ENCODE measurements at regions of chr6 and their contacts with region 1.

Region 1: DNA sequence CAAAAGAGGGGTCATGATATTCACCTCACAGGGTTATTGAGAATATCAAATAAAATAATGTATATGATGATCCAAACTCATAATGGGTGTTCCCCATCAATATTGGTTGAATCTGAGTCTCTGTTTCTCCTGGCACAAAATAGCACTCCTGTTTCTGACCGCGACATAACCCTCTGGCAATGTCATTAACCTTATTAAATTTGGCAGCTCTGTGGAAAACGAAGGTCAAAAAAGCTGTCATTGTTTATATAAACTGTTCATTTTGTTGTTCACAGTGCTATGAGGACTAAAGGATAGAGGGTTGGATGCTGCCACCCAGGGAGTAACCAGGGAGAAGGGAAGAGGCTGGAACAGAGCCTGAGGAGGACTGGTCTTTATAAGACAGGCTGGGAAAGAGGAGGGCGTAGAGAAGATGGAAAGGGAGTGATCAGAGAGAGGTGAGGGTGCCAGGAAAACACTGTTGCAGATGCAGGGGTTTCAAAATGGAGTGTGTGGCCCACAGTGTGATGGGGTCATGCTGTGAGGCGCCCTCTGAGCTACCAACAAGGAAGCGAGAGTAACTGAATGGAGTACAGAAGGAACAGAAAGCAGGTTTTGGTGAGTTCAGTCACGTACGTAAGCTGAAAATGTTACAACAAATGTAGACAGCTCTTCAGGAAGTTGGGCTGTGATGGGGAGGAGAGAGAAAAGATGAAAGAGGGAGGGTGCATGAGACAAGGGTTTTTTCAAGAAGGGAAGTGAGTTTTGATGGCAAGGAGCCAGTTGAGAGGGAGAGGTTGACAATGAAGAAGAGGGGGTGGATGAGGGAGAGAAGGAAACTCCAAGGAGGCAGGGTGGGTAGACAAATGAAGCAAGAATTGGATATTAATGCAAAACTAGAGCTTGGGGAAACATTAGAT is 251.6 kb upstream of the TAB2 start:
- DNase-seq: peak; percentile 62
- H3K4me3 Mint-ChIP-seq: peak overlapping the region; percentile 8
- H3K27ac Mint-ChIP-seq: peak overlapping the region; percentile 94
- H3K4me1 Mint-ChIP-seq: peaks cover 58% of the 10 kb centered on the region
- H3K27me3 Mint-ChIP-seq: no peaks in the 10 kb centered on the region

Region 2: GRCh38 chr6:149028767-149029405 is 37.0 kb before region 1 on chr6:
- CTCF ChIA-PET with region 1: interaction called, 13 read pairs
- DNase-seq: peak; percentile 78
- H3K4me3 Mint-ChIP-seq: no peak overlapping the region
- H3K27ac Mint-ChIP-seq: no peak overlapping the region
- H3K4me1 Mint-ChIP-seq: peaks cover 53% of the 10 kb centered on the region
- H3K27me3 Mint-ChIP-seq: no peaks in the 10 kb centered on the region

Measured in activated naive CD4-positive, alpha-beta T cell treated with anti-CD3 and anti-CD28 coated beads, Interleukin-2, amount 10 ng/mL, durations not matched to agents 7 days and 5 days (primary cell).